Right lobe of liver (tissue), 6 donors: ENCODE measurements at regions of chr5 and their contacts with region 1.

Region 1: GRCh38 chr5:55636683-55637082 is 75.4 kb downstream of the SLC38A9 start:
- DNase-seq: peak; percentile 58 to 89 (median 82)
- ATAC-seq: peak; percentile 77 to 89 (median 84)
- H3K4me3 ChIP-seq: no peak overlapping the region
- H3K27ac ChIP-seq: peak overlapping the region; percentile 89 to 98 (median 93)
- H3K4me1 ChIP-seq: peaks cover 0 to 63% (median 25%) of the 10 kb centered on the region in 4 donors
- H3K27me3 ChIP-seq: no peaks in the 10 kb centered on the region
- CTCF ChIP-seq: no peak
- POLR2A ChIP-seq: peak; percentile 39

Region 2: GRCh38 chr5:55601204-55601618 is 35.5 kb before region 1 on chr5:
- intact Hi-C with region 1: loop called in 1 of 2 experiments (anchors 5 kb)
- DNase-seq: peak; percentile 72 to 91 (median 84)
- ATAC-seq: peak; percentile 78 to 84 (median 80)
- H3K4me3 ChIP-seq: peak overlapping the region in 2 of 3 donors; percentile 6 to 32
- H3K27ac ChIP-seq: peak overlapping the region; percentile 91 to 96 (median 95)
- H3K4me1 ChIP-seq: peaks cover 6 to 55% (median 23%) of the 10 kb centered on the region in 4 donors
- H3K27me3 ChIP-seq: no peaks in the 10 kb centered on the region
- CTCF ChIP-seq: no peak
- POLR2A ChIP-seq: peak; percentile 93

Region 3: DNA sequence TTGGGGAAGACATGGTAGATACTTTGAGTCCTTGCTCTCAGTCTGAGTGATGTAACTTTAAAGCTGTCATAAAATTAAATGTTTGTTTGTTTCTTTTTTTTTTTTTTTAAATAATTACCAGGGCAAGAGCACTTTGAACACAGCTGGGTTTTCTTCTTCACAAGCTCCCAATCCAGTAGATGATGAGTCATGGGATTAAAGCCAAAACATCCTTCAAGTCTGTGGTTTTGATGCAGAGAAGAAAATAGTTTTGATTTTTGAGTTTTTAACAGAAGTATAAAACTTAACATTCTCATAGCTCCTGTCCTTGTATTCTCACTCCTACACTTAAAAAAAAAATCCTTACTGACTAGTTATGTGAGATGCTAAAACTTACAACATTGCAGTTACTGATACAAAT is 179.7 kb after region 1 on chr5:
- intact Hi-C with region 1: no loop called
- DNase-seq: no peak
- ATAC-seq: no peak
- H3K4me3 ChIP-seq: no peak overlapping the region
- H3K27ac ChIP-seq: no peak overlapping the region
- H3K4me1 ChIP-seq: no peaks in the 10 kb centered on the region
- H3K27me3 ChIP-seq: no peaks in the 10 kb centered on the region
- CTCF ChIP-seq: no peak
- POLR2A ChIP-seq: no peak

Region 4: DNA sequence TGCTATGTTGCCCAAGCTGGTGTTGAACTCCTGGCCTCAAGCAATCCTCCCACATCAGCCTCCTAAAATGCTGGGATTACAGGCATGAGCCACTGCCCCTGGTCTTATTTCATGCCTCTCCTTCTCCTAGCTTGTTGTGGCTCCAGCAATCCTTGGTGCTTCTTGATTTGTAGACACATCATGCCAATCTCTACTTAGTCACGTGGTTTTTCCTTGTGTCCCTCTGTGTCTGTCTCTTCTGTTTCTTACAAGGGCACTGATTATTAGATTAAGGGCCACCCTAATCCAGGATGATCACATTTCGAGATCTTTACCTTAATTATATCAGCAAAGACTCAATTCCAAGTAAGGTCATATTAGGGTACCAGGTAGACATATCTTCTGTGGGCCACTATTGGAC is 205.3 kb after region 1 on chr5:
- intact Hi-C with region 1: no loop called
- DNase-seq: no peak
- ATAC-seq: no peak
- H3K4me3 ChIP-seq: no peak overlapping the region
- H3K27ac ChIP-seq: no peak overlapping the region
- H3K4me1 ChIP-seq: no peaks in the 10 kb centered on the region
- H3K27me3 ChIP-seq: no peaks in the 10 kb centered on the region
- CTCF ChIP-seq: no peak
- POLR2A ChIP-seq: no peak